Testis (tissue), 5 donors: ENCODE measurements at regions of chr22 and their contacts with region 1.

Region 1: DNA sequence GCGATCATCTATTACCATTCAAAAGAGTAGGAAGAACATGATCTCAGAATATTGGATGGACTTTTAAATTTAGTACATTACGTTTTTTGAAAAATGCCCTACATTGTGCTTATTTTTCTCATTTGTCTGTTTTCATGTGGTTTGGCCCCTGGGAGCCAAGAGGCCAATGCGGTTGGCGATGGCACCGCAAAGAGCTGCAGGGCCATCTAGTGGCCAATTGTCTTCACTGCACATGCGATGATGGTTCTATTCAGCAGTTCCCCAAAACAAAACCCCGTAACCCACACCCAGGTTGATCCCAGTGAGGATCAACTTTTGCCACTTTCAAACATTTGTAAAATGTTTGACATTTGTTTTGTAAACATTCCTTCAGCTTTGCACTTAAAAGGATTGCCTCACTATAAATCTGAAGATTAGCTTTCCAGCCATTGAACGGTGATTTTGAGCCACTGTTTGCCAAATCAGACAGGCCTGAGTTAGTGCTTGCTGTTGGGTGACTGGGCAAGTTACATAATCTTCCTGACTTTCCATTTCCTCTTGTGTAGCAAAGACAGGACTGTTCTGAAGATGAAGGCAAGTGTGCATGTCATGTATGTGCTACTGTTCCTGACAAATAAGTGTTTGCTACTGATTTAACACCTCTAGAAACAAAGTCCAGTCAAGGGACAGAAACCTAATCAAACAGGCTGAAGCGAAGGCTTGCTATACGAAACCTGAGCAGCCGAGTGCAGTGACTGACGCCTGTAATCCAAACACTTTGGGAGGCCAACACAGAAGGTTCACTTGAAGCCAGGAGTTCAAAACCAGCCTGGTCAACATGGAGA is 29.2 kb upstream of the XBP1 start:
- DNase-seq: peak; percentile 88
- H3K4me3 ChIP-seq: no peak overlapping the region
- H3K27ac ChIP-seq: no peak overlapping the region
- H3K4me1 ChIP-seq: peaks cover 8% of the 10 kb centered on the region
- H3K27me3 ChIP-seq: no peaks in the 10 kb centered on the region
- CTCF ChIP-seq: peak; percentile 90 to 96 (median 96)
- POLR2A ChIP-seq: no peak

Region 2: DNA sequence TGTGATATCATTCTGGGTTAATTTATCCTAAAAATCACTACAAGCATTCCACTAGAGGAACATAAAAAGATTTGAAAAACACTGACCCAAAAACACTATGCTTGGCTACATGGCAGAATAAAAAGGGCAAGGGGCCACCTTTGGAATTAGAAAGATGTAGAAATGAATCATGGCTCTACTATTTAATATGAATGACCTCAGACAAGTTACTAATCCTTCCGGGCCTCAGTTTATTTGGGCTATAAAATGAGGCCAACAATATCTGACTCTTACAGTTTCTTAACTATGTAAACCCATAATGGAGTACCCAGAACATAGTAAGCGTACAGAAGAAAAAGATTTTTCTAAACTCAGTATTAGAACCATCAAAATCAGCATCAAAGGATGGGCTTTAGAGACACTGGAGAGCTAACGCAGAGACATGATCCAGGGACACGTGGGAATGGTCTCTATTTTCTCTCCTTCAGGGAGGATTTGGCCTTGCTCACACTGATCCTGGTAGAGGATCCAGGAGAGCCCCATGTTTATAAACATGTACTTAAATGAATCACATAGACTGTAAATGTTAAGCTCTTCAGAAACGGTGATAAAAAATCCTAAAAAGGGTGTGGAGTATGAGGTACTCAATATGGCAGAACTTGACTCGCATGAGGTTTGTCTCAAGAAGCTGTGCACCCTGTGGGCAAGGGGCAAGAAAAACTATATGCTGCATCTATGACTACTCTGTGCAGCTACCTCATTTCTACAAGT is 622.1 kb before region 1 on chr22:
- intact Hi-C with region 1: no loop called
- DNase-seq: no peak
- H3K4me3 ChIP-seq: no peak overlapping the region
- H3K27ac ChIP-seq: no peak overlapping the region
- H3K4me1 ChIP-seq: no peaks in the 10 kb centered on the region
- H3K27me3 ChIP-seq: no peaks in the 10 kb centered on the region
- CTCF ChIP-seq: no peak
- POLR2A ChIP-seq: no peak

Region 3: DNA sequence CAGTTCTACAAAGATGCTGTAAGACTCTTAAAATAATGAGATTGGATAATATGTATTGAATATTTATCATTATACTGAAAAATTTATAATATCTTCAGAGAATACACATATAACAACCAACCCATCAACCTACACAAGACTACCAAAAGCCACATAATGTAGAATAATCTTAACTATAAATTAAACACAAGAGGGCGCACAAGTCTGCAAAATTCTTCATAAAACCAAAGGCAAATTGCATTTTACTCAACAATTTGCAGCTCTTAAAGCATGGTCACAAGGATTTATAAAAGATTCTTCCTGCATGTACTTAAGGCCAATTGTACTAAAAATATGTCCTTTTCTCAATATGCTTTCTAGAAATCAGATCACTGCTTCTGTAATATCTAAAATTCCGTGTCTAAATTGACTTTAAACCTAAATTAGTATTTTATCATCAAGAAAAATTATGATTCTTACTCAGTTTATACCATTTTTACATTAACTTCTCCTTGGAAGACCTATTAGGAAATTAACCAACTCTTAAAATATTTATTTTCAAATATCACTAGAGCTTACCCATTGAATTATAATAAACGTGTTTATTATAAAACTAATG is 228.9 kb before region 1 on chr22:
- intact Hi-C with region 1: loop called (anchors 10 kb)
- DNase-seq: no peak
- H3K4me3 ChIP-seq: no peak overlapping the region
- H3K27ac ChIP-seq: no peak overlapping the region
- H3K4me1 ChIP-seq: no peaks in the 10 kb centered on the region
- H3K27me3 ChIP-seq: no peaks in the 10 kb centered on the region
- CTCF ChIP-seq: peak; percentile 37 to 43 (median 41)
- POLR2A ChIP-seq: no peak